Naive thymus-derived CD4-positive, alpha-beta T cell (primary cell): ENCODE measurements at regions of chr7 and their contacts with region 1.

Region 1: GRCh38 chr7:73667344-73668102 is at the start of gene VPS37D:
- DNase-seq: peak; percentile 84 to 99 (median 93)
- ATAC-seq: peak; percentile 98
- H3K4me3 ChIP-seq: peak within 1 kb of the TSS; percentile 44
- H3K4me3 Mint-ChIP-seq: peak within 1 kb of the TSS; percentile 61 to 84 (median 76)
- H3K27ac ChIP-seq: no peak within 1 kb of the TSS
- H3K27ac Mint-ChIP-seq: peak within 1 kb of the TSS in 5 of 9 donors; percentile 22 to 67 (median 49)
- H3K4me1 ChIP-seq: peaks cover 5 to 6% of the 10 kb centered on the region in 2 donors
- H3K4me1 Mint-ChIP-seq: peaks cover 0 to 15% (median 8%) of the 10 kb centered on the region in 7 donors
- H3K27me3 ChIP-seq: no peaks in the 10 kb centered on the region
- H3K27me3 Mint-ChIP-seq: peaks cover 27 to 58% (median 33%) of the 10 kb centered on the region in 5 donors
- total RNA-seq, gene VPS37D: 0.22 to 0.85 (median 0.44) TPM in 3 of 5 experiments, not detected in the others

Region 2: DNA sequence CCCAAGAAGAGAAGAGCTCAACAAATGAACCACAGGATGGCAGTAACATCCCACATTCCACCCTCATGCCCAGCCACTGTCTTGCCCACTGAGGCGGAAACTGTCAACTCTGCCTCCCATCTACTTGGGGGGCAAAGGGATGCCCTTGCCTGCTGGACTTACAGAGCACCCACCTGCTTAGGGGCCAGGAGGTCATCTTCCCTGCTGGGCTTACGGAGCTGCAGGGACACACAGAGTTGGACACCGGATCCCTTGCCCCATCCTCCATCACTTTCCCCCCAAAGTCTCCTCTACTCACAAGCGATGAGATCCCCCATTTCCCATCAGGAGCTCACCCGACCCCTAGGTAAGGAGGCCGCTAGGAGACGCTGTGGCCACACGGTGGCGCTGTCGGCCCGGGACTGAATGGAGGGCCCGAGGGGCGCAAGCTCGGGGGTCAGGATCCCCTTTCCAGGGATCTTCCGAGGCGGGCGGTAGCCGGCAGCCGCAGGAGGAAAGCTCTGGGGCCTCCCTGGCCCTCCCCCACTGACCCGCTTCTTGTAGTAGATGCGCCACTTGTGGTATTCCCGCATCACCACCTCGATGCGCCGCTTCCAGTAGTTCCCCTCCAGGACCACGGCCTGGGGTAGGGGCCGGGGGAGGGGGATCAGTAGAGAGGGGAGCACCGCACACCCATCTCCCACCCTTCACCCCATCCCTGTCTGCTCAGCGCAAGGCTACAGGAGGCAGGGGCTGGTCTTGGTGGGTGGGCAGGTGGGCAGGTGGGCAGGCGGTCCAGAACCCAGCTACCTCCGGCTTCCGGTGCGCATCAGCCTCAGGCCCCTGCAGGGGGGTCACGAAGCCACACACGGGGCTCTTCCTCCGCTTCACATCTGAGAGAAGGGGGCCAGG is 60.5 kb before region 1 on chr7:
- CTCF ChIA-PET with region 1: interaction called, 3 read pairs
- POLR2A ChIA-PET with region 1: no interaction called
- intact Hi-C with region 1: loop called (anchors 1 kb)
- DNase-seq: peak; percentile 42 to 77 (median 61)
- ATAC-seq: peak; percentile 85
- H3K4me3 ChIP-seq: no peak overlapping the region
- H3K4me3 Mint-ChIP-seq: no peak overlapping the region
- H3K27ac ChIP-seq: no peak overlapping the region
- H3K27ac Mint-ChIP-seq: peak overlapping the region in 1 of 9 donors; percentile 38
- H3K4me1 ChIP-seq: no peaks in the 10 kb centered on the region
- H3K4me1 Mint-ChIP-seq: peaks cover 0 to 3% (median 0%) of the 10 kb centered on the region in 7 donors
- H3K27me3 ChIP-seq: no peaks in the 10 kb centered on the region
- H3K27me3 Mint-ChIP-seq: peaks cover 4 to 41% (median 20%) of the 10 kb centered on the region in 5 donors

Region 3: GRCh38 chr7:73623798-73624668 is 43.5 kb before region 1 on chr7 and contains the start of gene MLXIPL:
- CTCF ChIA-PET with region 1: no interaction called
- POLR2A ChIA-PET with region 1: interaction called, 3 read pairs
- intact Hi-C with region 1: loop called in 1 of 2 experiments (anchors 1 kb)
- DNase-seq: peak in 7 of 9 donors; percentile 16 to 68 (median 30)
- ATAC-seq: peak; percentile 89
- H3K4me3 ChIP-seq: no peak within 1 kb of the TSS
- H3K4me3 Mint-ChIP-seq: peak within 1 kb of the TSS; percentile 25 to 78 (median 60)
- H3K27ac ChIP-seq: no peak within 1 kb of the TSS
- H3K27ac Mint-ChIP-seq: peak within 1 kb of the TSS in 1 of 9 donors; percentile 50
- H3K4me1 ChIP-seq: no peaks in the 10 kb centered on the region
- H3K4me1 Mint-ChIP-seq: peaks cover 0 to 9% (median 5%) of the 10 kb centered on the region in 7 donors
- H3K27me3 ChIP-seq: peaks cover 0 to 10% of the 10 kb centered on the region in 2 donors
- H3K27me3 Mint-ChIP-seq: peaks cover 38 to 74% (median 44%) of the 10 kb centered on the region in 5 donors
- total RNA-seq, gene MLXIPL: not detected

Region 4: DNA sequence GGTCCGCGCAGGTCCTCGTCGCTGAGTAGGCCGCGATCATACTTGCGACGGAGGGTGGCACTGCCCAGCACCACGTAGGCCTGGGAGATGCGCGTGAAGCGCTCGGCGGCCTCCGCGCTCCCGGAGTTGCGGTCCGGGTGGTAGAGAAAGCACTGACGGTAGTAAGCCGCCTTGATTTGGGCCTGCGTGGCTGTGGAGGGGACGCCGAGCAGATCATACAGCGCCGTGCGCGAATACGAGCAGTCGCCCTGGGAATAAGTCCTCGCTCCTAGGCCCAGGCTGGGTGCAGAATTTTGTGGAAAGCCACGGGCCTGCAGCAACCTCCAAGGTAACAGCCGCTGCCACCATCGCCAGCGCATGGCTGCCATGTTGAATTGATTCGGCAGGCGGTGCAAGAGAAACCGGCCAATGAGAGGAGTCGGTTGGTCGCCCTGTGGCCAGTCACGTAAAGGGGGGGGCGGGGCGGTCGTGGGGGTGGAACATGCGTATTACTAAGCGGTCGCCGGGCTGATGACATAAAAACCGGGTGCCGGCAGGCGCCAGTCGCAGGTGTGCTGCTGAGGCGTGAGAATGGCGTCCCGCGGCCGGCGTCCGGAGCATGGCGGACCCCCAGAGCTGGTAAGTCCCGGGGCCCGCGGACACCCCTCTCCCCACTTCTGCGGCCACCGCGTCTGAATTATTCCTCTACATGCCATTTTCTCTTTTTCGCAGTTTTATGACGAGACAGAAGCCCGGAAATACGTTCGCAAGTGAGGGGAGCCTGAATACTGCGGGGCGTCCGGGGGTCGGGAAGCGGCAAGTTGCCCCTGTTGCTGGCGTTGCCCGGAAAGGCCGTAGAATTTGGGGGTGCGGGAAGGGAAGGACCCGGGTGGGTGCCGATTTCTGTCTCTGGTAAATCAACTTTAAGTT is 15.8 kb after region 1 on chr7 and contains the starts of genes BUD23 and DNAJC30:
- CTCF ChIA-PET with region 1: no interaction called
- POLR2A ChIA-PET with region 1: no interaction called
- intact Hi-C with region 1: loop called (anchors 1 kb)
- DNase-seq: peak; percentile 77 to 97 (median 88)
- ATAC-seq: peak; percentile 98
- H3K4me3 ChIP-seq: peak within 1 kb of the TSS; percentile 97
- H3K4me3 Mint-ChIP-seq: peak within 1 kb of the TSS; percentile 91 to 98 (median 96)
- H3K27ac ChIP-seq: peak within 1 kb of the TSS; percentile 91
- H3K27ac Mint-ChIP-seq: peak within 1 kb of the TSS; percentile 91 to 97 (median 95)
- H3K4me1 ChIP-seq: peaks cover 17% of the 10 kb centered on the region in 2 donors
- H3K4me1 Mint-ChIP-seq: peaks cover 17 to 62% (median 42%) of the 10 kb centered on the region in 7 donors
- H3K27me3 ChIP-seq: no peaks in the 10 kb centered on the region
- H3K27me3 Mint-ChIP-seq: no peaks in the 10 kb centered on the region
- total RNA-seq, gene BUD23: 50.5 to 107 (median 72.0) TPM
- total RNA-seq, gene DNAJC30: 9.5 to 22.4 (median 13.4) TPM